H1 (cell line): ENCODE measurements at regions of chr5 and their contacts with region 1.

Region 1: DNA sequence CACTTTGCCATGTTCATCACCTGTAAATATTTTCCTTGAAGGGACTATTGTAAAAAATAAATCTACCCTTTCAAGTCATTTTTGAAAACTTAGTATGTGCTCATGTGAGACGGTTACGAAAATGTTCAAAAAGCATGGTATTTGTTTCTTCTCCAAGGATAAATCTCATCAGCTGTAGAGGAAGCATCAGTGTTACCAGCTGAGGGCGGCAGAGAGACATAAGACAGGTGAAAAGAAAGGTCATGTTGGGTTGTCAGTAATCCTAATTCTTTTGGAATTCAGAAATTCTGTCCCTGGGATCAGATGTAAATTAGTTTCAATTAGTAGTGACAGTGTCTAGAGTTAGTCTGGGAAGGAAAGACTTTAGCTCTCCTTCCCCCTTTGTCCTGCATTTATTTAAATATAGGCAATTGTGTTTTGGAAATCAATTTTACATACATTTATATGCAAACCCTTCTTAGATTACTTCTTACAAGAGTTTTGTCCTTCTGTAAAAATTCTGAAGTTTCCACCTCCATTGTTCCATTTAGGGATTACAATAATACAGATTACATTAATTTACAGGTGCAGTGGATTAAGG is 791.9 kb upstream of the CDH6 start:
- DNase-seq: peak in 1 of 2 experiments; percentile 57
- H3K4me3 ChIP-seq: no peak overlapping the region
- H3K27ac ChIP-seq: no peak overlapping the region
- H3K4me1 ChIP-seq: no peaks in the 10 kb centered on the region
- H3K27me3 ChIP-seq: peaks cover 0 to 1% (median 0%) of the 10 kb centered on the region in 4 experiments; a peak in 1 of 7 replicates
- CTCF ChIP-seq: peak in 2 of 3 experiments; percentile 51 to 69; a peak in 2 of 4 replicates
- EP300 ChIP-seq: no peak
- POLR2A ChIP-seq: no peak
- RAD21 ChIP-seq: peak; percentile 78 to 85

Region 2: GRCh38 chr5:30040488-30041118 is 361.0 kb before region 1 on chr5:
- CTCF ChIA-PET with region 1: interaction called, 10 read pairs
- POLR2A ChIA-PET with region 1: no interaction called
- DNase-seq: peak; percentile 27 to 67
- H3K4me3 ChIP-seq: no peak overlapping the region
- H3K27ac ChIP-seq: no peak overlapping the region
- H3K4me1 ChIP-seq: no peaks in the 10 kb centered on the region; a peak in 1 of 7 replicates
- H3K27me3 ChIP-seq: no peaks in the 10 kb centered on the region
- CTCF ChIP-seq: peak; percentile 24 to 91 (median 82)
- EP300 ChIP-seq: no peak
- POLR2A ChIP-seq: no peak
- RAD21 ChIP-seq: peak; percentile 95 to 97